Heart right ventricle (tissue), 16 donors: ENCODE measurements at regions of chr12 and their contacts with region 1.

Region 1: DNA sequence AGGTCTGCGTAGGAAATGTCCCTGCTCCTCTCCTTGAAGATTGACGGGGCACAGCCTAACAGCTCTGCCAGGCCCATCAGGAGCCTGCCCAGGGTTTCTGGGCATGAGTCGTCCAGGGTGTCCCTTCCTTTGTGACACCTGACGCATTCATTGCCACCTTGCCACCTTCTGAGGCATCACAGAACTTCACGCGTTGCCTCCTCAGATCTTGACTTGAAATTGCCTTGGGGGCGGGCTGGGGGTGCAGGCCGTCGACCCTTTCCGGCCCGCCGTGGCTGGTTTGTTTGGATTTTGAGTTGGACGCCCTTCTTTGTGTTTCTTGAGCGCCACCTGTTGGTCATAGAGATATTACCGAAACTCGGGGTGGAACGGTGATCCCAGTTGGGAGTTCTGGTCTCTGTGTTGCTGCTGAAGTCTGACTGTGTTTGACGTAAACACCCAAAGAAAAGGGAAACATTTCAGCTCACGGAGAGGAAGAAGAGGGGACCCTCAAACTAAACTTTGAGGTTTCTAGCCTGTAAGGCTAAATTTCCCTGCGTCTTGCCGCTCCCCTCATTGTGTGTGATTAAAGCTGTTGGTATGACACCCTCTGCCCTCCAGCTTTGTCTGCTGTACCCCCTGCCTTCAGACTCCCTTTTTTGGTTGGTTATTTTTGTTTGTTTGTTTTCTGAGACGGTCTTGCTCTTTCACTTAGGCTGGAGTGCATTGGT is 44.6 kb downstream of the MLXIP start:
- DNase-seq: peak; percentile 44 to 77
- ATAC-seq: peak; percentile 36 to 67 (median 52)
- H3K4me3 ChIP-seq: peak overlapping the region in 1 of 10 donors; percentile 18
- H3K27ac ChIP-seq: peak overlapping the region in 3 of 10 donors; percentile 30 to 58 (median 51)
- H3K4me1 ChIP-seq: peaks cover 8 to 61% (median 39%) of the 10 kb centered on the region in 9 donors
- H3K27me3 ChIP-seq: no peaks in the 10 kb centered on the region
- CTCF ChIP-seq: peak; percentile 55 to 87 (median 77)

Region 2: GRCh38 chr12:121917979-121918678 is 205.1 kb before region 1 on chr12 and contains the start of gene CFAP251:
- intact Hi-C with region 1: loop called in 6 of 10 experiments (anchors 1 to 10 kb)
- DNase-seq: peak; percentile 90 to 96
- ATAC-seq: peak; percentile 90 to 98 (median 96)
- H3K4me3 ChIP-seq: peak within 1 kb of the TSS in 9 of 10 donors; percentile 35 to 58 (median 52)
- H3K27ac ChIP-seq: peak within 1 kb of the TSS in 7 of 10 donors; percentile 21 to 71 (median 44)
- H3K4me1 ChIP-seq: peaks cover 0 to 17% (median 5%) of the 10 kb centered on the region in 9 donors
- H3K27me3 ChIP-seq: no peaks in the 10 kb centered on the region
- CTCF ChIP-seq: peak; percentile 21 to 88 (median 67)
- total RNA-seq, gene CFAP251: 0.52 to 4.6 (median 1.9) TPM

Region 3: GRCh38 chr12:121955258-121956235 is 167.7 kb before region 1 on chr12:
- intact Hi-C with region 1: loop called in 1 of 10 experiments (anchors 10 kb)
- DNase-seq: no peak
- ATAC-seq: peak in 2 of 8 donors; percentile 22 to 42
- H3K4me3 ChIP-seq: no peak overlapping the region
- H3K27ac ChIP-seq: no peak overlapping the region
- H3K4me1 ChIP-seq: no peaks in the 10 kb centered on the region
- H3K27me3 ChIP-seq: no peaks in the 10 kb centered on the region
- CTCF ChIP-seq: peak in 8 of 9 donors; percentile 15 to 61 (median 56)

Region 4: GRCh38 chr12:122051231-122051876 is 71.9 kb before region 1 on chr12:
- intact Hi-C with region 1: loop called (anchors 1 to 5 kb)
- DNase-seq: peak; percentile 46 to 76
- ATAC-seq: peak; percentile 57 to 88 (median 82)
- H3K4me3 ChIP-seq: peak overlapping the region in 1 of 10 donors; percentile 16
- H3K27ac ChIP-seq: peak overlapping the region; percentile 83 to 91 (median 90)
- H3K4me1 ChIP-seq: peaks cover 12 to 33% (median 24%) of the 10 kb centered on the region in 9 donors
- H3K27me3 ChIP-seq: no peaks in the 10 kb centered on the region
- CTCF ChIP-seq: no peak

Region 5: GRCh38 chr12:122078141-122079032 is 44.8 kb before region 1 on chr12 and contains the start of gene MLXIP:
- intact Hi-C with region 1: loop called in 1 of 10 experiments (anchors 5 kb)
- DNase-seq: peak; percentile 93 to 95
- ATAC-seq: peak; percentile 85 to 95 (median 90)
- H3K4me3 ChIP-seq: peak within 1 kb of the TSS; percentile 48 to 89 (median 76)
- H3K27ac ChIP-seq: peak within 1 kb of the TSS; percentile 82 to 93 (median 88)
- H3K4me1 ChIP-seq: peaks cover 9 to 54% (median 48%) of the 10 kb centered on the region in 9 donors
- H3K27me3 ChIP-seq: no peaks in the 10 kb centered on the region
- CTCF ChIP-seq: no peak
- total RNA-seq, gene MLXIP: 17.3 to 37.9 (median 20.9) TPM

Region 6: DNA sequence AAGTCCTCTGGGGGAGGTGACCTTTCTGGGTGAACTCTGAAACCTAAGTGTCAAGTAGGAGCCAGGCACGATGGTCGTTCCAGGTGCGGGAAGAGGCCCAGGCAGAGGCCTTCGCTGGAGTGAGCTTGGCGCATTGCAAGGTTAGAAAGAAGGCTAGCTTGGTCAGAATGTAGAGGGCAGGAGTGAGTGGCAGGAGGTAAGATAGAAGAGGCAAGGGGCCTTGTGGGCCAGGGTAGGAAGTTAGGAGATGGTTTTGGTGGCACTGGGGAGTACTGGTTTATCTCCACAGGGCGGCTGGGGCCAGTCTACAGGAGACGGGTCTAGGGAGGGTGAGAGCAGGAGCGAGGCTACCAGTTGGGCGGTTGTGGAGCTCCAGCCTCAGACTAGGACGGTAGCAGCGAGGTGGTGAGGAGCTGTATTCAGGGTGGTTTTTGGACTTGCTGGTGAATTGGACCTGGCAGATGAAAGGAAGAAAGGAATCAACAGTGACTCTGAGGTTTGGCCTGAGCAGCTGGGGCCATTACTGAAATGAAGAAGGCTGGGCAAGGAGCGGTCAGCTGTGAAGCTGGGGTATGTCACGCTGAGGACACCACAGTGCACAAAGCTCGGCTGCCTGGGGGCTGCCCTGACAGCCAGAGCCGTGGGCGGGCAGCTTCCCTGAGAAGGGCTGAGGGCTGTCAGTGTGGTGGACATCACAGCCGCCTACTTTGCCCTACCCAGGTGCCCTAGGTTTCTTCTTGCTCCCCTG is 35.6 kb before region 1 on chr12:
- intact Hi-C with region 1: loop called in 2 of 10 experiments (anchors 2 to 5 kb)
- DNase-seq: no peak
- ATAC-seq: peak in 7 of 8 donors; percentile 12 to 45 (median 23)
- H3K4me3 ChIP-seq: peak overlapping the region in 2 of 10 donors; percentile 10 to 20
- H3K27ac ChIP-seq: peak overlapping the region; percentile 5 to 77 (median 54)
- H3K4me1 ChIP-seq: peaks cover 28 to 96% (median 78%) of the 10 kb centered on the region in 9 donors
- H3K27me3 ChIP-seq: no peaks in the 10 kb centered on the region
- CTCF ChIP-seq: no peak